H1 (cell line): ENCODE measurements at regions of chr3 and their contacts with region 1.

Region 1: GRCh38 chr3:171162986-171163723 is 136.6 kb upstream of the SLC2A2 start:
- DNase-seq: no peak
- H3K4me3 ChIP-seq: no peak overlapping the region
- H3K27ac ChIP-seq: no peak overlapping the region
- H3K4me1 ChIP-seq: peaks cover 0 to 10% (median 3%) of the 10 kb centered on the region in 4 experiments; a peak in 4 of 7 replicates
- H3K27me3 ChIP-seq: no peaks in the 10 kb centered on the region
- CTCF ChIP-seq: peak in 2 of 3 experiments; percentile 53 to 66; a peak in 2 of 4 replicates
- EP300 ChIP-seq: no peak
- POLR2A ChIP-seq: no peak
- RAD21 ChIP-seq: peak; percentile 79 to 80

Region 2: GRCh38 chr3:171049861-171050444 is 113.2 kb before region 1 on chr3:
- CTCF ChIA-PET with region 1: interaction called, 12 read pairs
- POLR2A ChIA-PET with region 1: no interaction called
- DNase-seq: peak; percentile 36 to 65
- H3K4me3 ChIP-seq: no peak overlapping the region
- H3K27ac ChIP-seq: no peak overlapping the region
- H3K4me1 ChIP-seq: no peaks in the 10 kb centered on the region
- H3K27me3 ChIP-seq: no peaks in the 10 kb centered on the region
- CTCF ChIP-seq: peak; percentile 67 to 84 (median 68)
- EP300 ChIP-seq: no peak
- POLR2A ChIP-seq: no peak
- RAD21 ChIP-seq: peak; percentile 91 to 92

Region 3: DNA sequence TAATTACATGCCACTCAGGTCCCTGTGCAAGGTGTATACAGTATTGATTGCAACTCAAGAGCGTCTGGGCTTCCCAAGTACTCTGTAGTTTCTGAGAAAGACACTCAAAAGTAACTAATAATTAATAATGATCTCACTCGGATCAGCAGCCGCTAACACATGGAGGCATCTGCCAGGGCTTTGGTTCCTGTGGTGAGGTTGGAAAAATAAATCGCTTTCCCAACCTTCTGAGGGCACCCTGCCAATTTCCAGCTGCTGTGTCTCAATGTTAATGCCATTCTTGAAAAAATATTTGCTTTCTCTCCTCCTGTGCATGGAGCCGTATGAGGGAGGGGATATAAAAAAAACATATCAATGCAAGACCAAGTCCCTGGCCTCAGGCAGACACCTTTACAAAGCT is 20.2 kb before region 1 on chr3:
- CTCF ChIA-PET with region 1: interaction called, 11 read pairs
- POLR2A ChIA-PET with region 1: no interaction called
- DNase-seq: no peak
- H3K4me3 ChIP-seq: no peak overlapping the region
- H3K27ac ChIP-seq: no peak overlapping the region
- H3K4me1 ChIP-seq: no peaks in the 10 kb centered on the region
- H3K27me3 ChIP-seq: no peaks in the 10 kb centered on the region
- CTCF ChIP-seq: no peak
- EP300 ChIP-seq: no peak
- POLR2A ChIP-seq: no peak
- RAD21 ChIP-seq: no peak

Region 4: DNA sequence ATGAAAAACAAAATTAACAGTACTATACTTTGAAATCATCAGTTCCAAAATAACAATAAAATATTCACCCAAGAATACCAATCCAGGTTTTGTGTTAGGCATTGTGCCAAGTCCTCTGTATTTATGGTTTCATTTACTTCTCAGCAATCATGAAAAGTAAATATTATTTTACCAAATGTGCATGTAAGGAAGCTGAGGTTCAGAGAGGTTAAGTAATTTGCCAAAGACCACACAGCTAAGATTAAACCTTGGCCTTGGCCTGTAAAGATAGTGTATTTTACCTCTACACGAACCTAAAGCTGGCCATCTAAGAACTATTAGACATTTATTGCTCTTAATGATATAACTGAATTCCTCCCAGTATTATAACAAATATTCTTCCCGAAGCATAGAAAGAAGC is 12.2 kb before region 1 on chr3:
- CTCF ChIA-PET with region 1: interaction called, 16 read pairs
- POLR2A ChIA-PET with region 1: no interaction called
- DNase-seq: no peak
- H3K4me3 ChIP-seq: no peak overlapping the region
- H3K27ac ChIP-seq: no peak overlapping the region
- H3K4me1 ChIP-seq: no peaks in the 10 kb centered on the region
- H3K27me3 ChIP-seq: no peaks in the 10 kb centered on the region
- CTCF ChIP-seq: no peak
- EP300 ChIP-seq: no peak
- POLR2A ChIP-seq: no peak
- RAD21 ChIP-seq: no peak

Region 5: GRCh38 chr3:171566803-171567422 is 403.8 kb after region 1 on chr3:
- CTCF ChIA-PET with region 1: interaction called, 20 read pairs
- POLR2A ChIA-PET with region 1: no interaction called
- DNase-seq: no peak
- H3K4me3 ChIP-seq: no peak overlapping the region
- H3K27ac ChIP-seq: no peak overlapping the region
- H3K4me1 ChIP-seq: no peaks in the 10 kb centered on the region
- H3K27me3 ChIP-seq: peaks cover 0 to 1% (median 0%) of the 10 kb centered on the region in 4 experiments; a peak in 1 of 7 replicates
- CTCF ChIP-seq: peak in 2 of 3 experiments; percentile 60 to 71; a peak in 2 of 4 replicates
- EP300 ChIP-seq: no peak
- POLR2A ChIP-seq: no peak
- RAD21 ChIP-seq: peak; percentile 91 to 92